Right lobe of liver (tissue), 6 donors: ENCODE measurements at regions of chr4 and their contacts with region 1.

Region 1: GRCh38 chr4:154399259-154399974 is 92.2 kb downstream of the DCHS2 start:
- DNase-seq: no peak
- ATAC-seq: peak; percentile 80 to 98 (median 90)
- H3K4me3 ChIP-seq: peak overlapping the region in 1 of 3 donors; percentile 19
- H3K27ac ChIP-seq: no peak overlapping the region
- H3K4me1 ChIP-seq: no peaks in the 10 kb centered on the region
- H3K27me3 ChIP-seq: no peaks in the 10 kb centered on the region
- CTCF ChIP-seq: peak; percentile 51 to 63 (median 58)
- POLR2A ChIP-seq: no peak

Region 2: DNA sequence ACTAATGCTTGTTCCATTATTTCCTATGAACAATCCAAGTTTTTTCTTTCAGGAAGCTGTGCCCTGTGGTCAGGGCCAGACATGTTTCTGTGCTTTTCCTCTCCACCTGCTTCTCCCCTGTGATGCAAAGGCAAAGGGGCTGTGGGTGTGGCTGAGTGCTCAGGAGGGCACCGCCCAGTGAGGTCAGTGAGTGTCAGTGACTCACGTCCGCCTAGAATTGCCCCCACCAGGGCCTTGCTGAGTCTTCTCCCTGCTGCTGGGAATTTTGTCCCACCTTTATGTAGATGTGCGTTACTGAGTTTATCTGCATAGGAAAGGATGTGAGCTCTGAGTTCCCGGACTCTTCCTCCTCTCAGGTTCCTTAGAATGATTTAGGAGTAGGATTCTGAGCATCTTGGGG is 191.0 kb before region 1 on chr4:
- intact Hi-C with region 1: no loop called
- DNase-seq: no peak
- ATAC-seq: no peak
- H3K4me3 ChIP-seq: no peak overlapping the region
- H3K27ac ChIP-seq: no peak overlapping the region
- H3K4me1 ChIP-seq: no peaks in the 10 kb centered on the region
- H3K27me3 ChIP-seq: no peaks in the 10 kb centered on the region
- CTCF ChIP-seq: no peak
- POLR2A ChIP-seq: no peak

Region 3: GRCh38 chr4:154465085-154465484 is 65.7 kb after region 1 on chr4:
- intact Hi-C with region 1: no loop called
- DNase-seq: no peak
- ATAC-seq: no peak
- H3K4me3 ChIP-seq: no peak overlapping the region
- H3K27ac ChIP-seq: no peak overlapping the region
- H3K4me1 ChIP-seq: no peaks in the 10 kb centered on the region
- H3K27me3 ChIP-seq: no peaks in the 10 kb centered on the region
- CTCF ChIP-seq: no peak
- POLR2A ChIP-seq: no peak

Region 4: DNA sequence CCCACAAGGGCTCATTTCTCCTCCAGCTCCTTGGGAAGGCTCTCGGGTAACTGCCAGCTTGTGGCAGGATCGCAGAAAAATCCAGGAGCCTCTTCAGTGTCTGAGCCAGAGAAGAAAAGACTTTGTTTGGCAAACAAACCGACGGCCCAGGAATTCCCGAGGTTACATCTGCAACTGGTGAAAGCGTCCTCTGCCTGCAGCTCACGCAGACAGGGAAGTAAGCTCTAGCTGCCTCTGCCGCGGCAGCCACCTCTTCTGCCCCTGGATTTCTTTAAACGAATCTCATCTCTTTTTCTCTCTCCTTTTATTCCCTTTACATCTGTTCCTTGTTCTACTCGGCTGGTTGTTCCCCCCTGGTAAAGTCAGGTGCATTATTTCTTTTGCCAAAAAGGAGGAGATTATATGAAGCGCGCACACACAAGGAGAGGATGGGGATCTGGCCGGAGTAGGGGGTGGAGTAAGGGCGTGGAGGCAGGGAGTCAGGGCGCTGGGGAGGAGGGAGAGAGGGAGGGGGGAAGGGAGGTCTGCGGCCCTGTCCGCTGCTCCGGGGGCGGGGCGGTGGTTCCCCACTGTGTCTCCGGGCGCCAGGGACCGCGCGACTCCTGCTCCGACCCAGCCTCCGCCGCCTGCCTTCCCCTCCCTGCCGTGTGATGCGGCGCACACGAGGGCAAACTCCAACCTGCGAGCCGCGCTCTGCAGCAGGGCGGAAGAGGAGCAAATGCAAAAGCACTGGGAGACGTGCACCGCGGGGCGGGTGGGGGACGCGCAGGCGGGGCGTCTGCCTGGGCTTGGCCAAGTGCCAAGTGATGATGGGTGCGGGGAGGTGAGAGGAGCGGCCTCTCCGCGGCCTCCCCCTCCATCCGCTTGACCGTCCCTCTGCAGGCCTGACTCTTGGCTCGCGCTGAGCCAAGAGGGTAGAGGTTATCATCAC is 92.2 kb after region 1 on chr4 and contains the start of gene DCHS2:
- intact Hi-C with region 1: loop called in 1 of 2 experiments (anchors 5 kb)
- DNase-seq: peak; percentile 58 to 70 (median 58)
- ATAC-seq: peak; percentile 89 to 93 (median 90)
- H3K4me3 ChIP-seq: peak within 1 kb of the TSS in 2 of 3 donors; percentile 23 to 26
- H3K27ac ChIP-seq: no peak within 1 kb of the TSS
- H3K4me1 ChIP-seq: peaks cover 0 to 22% (median 0%) of the 10 kb centered on the region in 4 donors
- H3K27me3 ChIP-seq: peaks cover 0 to 18% of the 10 kb centered on the region in 2 donors
- CTCF ChIP-seq: no peak
- POLR2A ChIP-seq: no peak
- total RNA-seq, gene DCHS2: 0.07 to 0.37 (median 0.12) TPM in 5 of 6 experiments, not detected in the other

Region 5: DNA sequence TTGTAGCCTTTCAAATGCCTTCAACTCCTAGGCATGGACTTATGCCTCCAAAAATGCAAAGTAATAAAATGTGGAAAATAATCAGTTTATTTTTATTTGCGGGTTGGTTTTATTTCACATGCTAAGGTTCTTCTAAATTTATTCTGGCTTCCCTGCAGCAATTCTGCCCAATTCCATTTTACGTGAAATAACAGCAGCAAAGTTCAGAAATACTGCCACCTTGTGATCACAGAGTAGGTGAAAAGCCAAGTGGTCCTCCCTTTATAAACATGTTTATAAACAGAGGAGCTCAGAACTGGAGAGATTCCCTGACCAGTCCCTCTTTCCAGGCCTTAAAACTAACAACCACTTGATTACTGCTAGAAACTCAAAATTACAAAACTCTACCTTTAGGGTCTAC is 106.8 kb after region 1 on chr4:
- intact Hi-C with region 1: loop called in 1 of 2 experiments (anchors 10 kb)
- DNase-seq: no peak
- ATAC-seq: peak; percentile 75 to 86 (median 81)
- H3K4me3 ChIP-seq: no peak overlapping the region
- H3K27ac ChIP-seq: no peak overlapping the region
- H3K4me1 ChIP-seq: no peaks in the 10 kb centered on the region
- H3K27me3 ChIP-seq: no peaks in the 10 kb centered on the region
- CTCF ChIP-seq: peak; percentile 49 to 65 (median 60)
- POLR2A ChIP-seq: no peak